ENCODE measurements at regions of chr11 and their contacts with region 1.

Region 1: GRCh38 chr11:36478700-36479329 is 31.3 kb downstream of the TRAF6 start:
- DNase-seq: peak; percentile 60
- H3K4me3 ChIP-seq: no peak overlapping the region
- H3K27ac ChIP-seq: no peak overlapping the region
- H3K4me1 ChIP-seq: no peaks in the 10 kb centered on the region
- H3K27me3 ChIP-seq: no peaks in the 10 kb centered on the region
- CTCF ChIP-seq: peak; percentile 47 to 50
- POLR2A ChIP-seq: no peak

Region 2: DNA sequence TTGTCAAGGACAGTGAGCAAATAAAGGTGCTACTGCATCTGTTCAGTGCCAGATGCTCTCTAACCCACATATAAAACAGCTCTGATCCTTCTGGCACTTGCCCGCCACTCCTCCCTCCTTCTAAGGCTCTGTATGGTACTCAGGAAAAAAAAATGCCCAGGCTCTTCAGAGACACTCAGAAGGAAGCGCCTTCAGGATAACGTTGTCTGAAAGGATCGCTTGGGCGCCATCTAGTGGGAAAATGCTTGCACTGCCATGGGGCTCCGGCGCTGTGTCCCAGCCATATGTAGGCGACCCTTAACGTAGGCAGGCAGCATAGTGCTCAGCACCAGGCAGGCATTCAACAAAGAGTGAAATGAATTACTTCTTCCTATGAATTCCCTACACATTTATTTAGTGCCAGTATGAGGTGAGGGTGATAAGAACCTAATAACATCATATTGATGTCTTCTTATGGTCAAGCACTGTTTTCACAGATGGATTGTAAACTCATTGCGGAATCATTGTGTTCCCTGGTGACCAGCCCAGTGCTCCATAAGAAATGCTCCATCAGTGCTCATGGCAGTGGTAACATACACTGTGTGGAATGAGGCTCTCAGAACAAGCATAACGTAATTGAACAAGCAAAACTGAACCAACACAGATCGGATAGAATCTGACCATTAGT is 993.0 kb before region 1 on chr11:
- CTCF ChIA-PET with region 1: interaction called, 6 read pairs
- POLR2A ChIA-PET with region 1: no interaction called
- dilution Hi-C with region 1: no loop called
- intact Hi-C with region 1: loop called (anchors 10 kb)
- DNase-seq: peak; percentile 79
- H3K4me3 ChIP-seq: no peak overlapping the region
- H3K27ac ChIP-seq: no peak overlapping the region
- H3K4me1 ChIP-seq: no peaks in the 10 kb centered on the region
- H3K27me3 ChIP-seq: peaks cover 8 to 10% of the 10 kb centered on the region in 2 experiments
- CTCF ChIP-seq: peak; percentile 85 to 92
- POLR2A ChIP-seq: no peak

Region 3: GRCh38 chr11:36265793-36266628 is 212.8 kb before region 1 on chr11:
- CTCF ChIA-PET with region 1: interaction called, 63 read pairs
- POLR2A ChIA-PET with region 1: no interaction called
- dilution Hi-C with region 1: no loop called
- intact Hi-C with region 1: no loop called
- DNase-seq: peak; percentile 40
- H3K4me3 ChIP-seq: no peak overlapping the region
- H3K27ac ChIP-seq: no peak overlapping the region
- H3K4me1 ChIP-seq: no peaks in the 10 kb centered on the region
- H3K27me3 ChIP-seq: peaks cover 0 to 5% of the 10 kb centered on the region in 2 experiments
- CTCF ChIP-seq: peak; percentile 86 to 89
- POLR2A ChIP-seq: no peak

Region 4: GRCh38 chr11:36278531-36279282 is 200.1 kb before region 1 on chr11:
- CTCF ChIA-PET with region 1: interaction called, 11 read pairs
- POLR2A ChIA-PET with region 1: no interaction called
- dilution Hi-C with region 1: no loop called
- intact Hi-C with region 1: no loop called
- DNase-seq: no peak
- H3K4me3 ChIP-seq: no peak overlapping the region
- H3K27ac ChIP-seq: no peak overlapping the region
- H3K4me1 ChIP-seq: no peaks in the 10 kb centered on the region
- H3K27me3 ChIP-seq: no peaks in the 10 kb centered on the region
- CTCF ChIP-seq: no peak
- POLR2A ChIP-seq: no peak

Region 5: GRCh38 chr11:36289226-36289852 is 189.5 kb before region 1 on chr11 and contains the start of gene COMMD9:
- CTCF ChIA-PET with region 1: interaction called, 306 read pairs
- POLR2A ChIA-PET with region 1: no interaction called
- dilution Hi-C with region 1: no loop called
- intact Hi-C with region 1: loop called (anchors 1 kb)
- DNase-seq: peak; percentile 93
- H3K4me3 ChIP-seq: peak within 1 kb of the TSS; percentile 73 to 95 (median 75)
- H3K27ac ChIP-seq: peak within 1 kb of the TSS; percentile 32
- H3K4me1 ChIP-seq: peaks cover 9% of the 10 kb centered on the region
- H3K27me3 ChIP-seq: no peaks in the 10 kb centered on the region
- CTCF ChIP-seq: no peak
- POLR2A ChIP-seq: peak; percentile 77
- total RNA-seq, gene COMMD9: 78.9 and 79.0 TPM in 2 replicates

Region 6: DNA sequence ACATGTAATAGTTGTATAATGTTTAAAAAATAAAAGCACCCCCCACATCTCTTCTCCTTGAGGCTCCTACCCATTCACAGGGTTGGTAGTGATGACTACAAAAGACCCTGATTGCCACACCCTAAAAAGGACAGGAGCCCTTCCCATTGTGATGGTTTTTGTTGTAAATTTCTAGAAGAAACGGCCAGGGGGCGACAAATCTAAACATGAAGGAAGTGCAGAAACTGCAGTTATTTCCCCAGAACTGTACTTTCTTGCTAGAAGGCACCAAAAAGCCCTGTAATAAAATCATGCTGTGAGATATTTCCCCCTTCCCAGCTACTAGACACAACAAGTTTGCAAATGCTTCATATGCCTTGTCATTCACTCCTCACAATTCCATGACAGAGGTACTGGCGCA is 171.9 kb before region 1 on chr11:
- CTCF ChIA-PET with region 1: interaction called, 26 read pairs
- POLR2A ChIA-PET with region 1: no interaction called
- dilution Hi-C with region 1: no loop called
- intact Hi-C with region 1: loop called (anchors 1 kb)
- DNase-seq: no peak
- H3K4me3 ChIP-seq: no peak overlapping the region
- H3K27ac ChIP-seq: no peak overlapping the region
- H3K4me1 ChIP-seq: no peaks in the 10 kb centered on the region
- H3K27me3 ChIP-seq: peaks cover 0 to 2% of the 10 kb centered on the region in 2 experiments
- CTCF ChIP-seq: peak in 1 of 2 donors; percentile 29
- POLR2A ChIP-seq: no peak

Region 7: GRCh38 chr11:36455658-36456111 is 23.1 kb before region 1 on chr11:
- CTCF ChIA-PET with region 1: interaction called, 13 read pairs
- POLR2A ChIA-PET with region 1: no interaction called
- dilution Hi-C with region 1: no loop called
- intact Hi-C with region 1: no loop called
- DNase-seq: peak; percentile 54
- H3K4me3 ChIP-seq: no peak overlapping the region
- H3K27ac ChIP-seq: peak overlapping the region; percentile 30
- H3K4me1 ChIP-seq: no peaks in the 10 kb centered on the region
- H3K27me3 ChIP-seq: no peaks in the 10 kb centered on the region
- CTCF ChIP-seq: no peak
- POLR2A ChIP-seq: no peak